ENCODE measurements at regions of chr2 and their contacts with region 1.

Region 1: GRCh38 chr2:198283146-198283545 is 478.8 kb downstream of the PLCL1 start:
- H3K4me3 Mint-ChIP-seq: no peak overlapping the region
- H3K27ac Mint-ChIP-seq: no peak overlapping the region
- H3K4me1 Mint-ChIP-seq: no peaks in the 10 kb centered on the region
- H3K27me3 Mint-ChIP-seq: peaks cover 9% of the 10 kb centered on the region

Region 2: GRCh38 chr2:198144660-198145059 is 138.5 kb before region 1 on chr2:
- intact Hi-C with region 1: loop called (anchors 10 kb)
- H3K4me3 Mint-ChIP-seq: no peak overlapping the region
- H3K27ac Mint-ChIP-seq: no peak overlapping the region
- H3K4me1 Mint-ChIP-seq: no peaks in the 10 kb centered on the region
- H3K27me3 Mint-ChIP-seq: no peaks in the 10 kb centered on the region